CD8-positive, alpha-beta memory T cell (primary cell): ENCODE measurements at regions of chr19 and their contacts with region 1.

Region 1: DNA sequence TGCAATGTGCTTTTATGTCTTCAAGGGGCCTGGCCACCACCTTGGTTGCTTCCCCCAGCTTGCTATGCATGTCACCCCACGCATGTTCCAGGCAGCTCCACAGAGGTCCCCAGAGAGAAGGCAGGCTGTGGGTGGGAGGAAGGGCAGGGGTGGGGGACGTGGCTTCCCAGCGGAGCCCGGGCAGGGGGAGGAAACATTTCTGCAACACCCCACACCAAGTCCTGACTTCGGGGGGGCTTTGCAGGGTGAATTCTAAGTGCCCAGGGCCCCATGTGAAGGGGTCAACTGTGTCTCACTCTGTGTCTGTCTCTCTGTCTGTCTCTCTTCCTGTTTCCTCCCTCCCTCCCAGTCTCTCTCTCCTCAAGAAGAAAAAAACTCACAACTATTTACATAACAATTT is 39.6 kb downstream of the LTBP4 start:
- DNase-seq: no peak
- H3K4me3 ChIP-seq: no peak overlapping the region
- H3K4me3 Mint-ChIP-seq: no peak overlapping the region
- H3K27ac ChIP-seq: no peak overlapping the region
- H3K27ac Mint-ChIP-seq: no peak overlapping the region
- H3K4me1 ChIP-seq: no peaks in the 10 kb centered on the region
- H3K4me1 Mint-ChIP-seq: peaks cover 0 to 5% (median 0%) of the 10 kb centered on the region in 3 donors
- H3K27me3 ChIP-seq: no peaks in the 10 kb centered on the region
- H3K27me3 Mint-ChIP-seq: peaks cover 10 to 12% of the 10 kb centered on the region in 2 donors

Region 2: GRCh38 chr19:40305403-40305802 is 335.3 kb before region 1 on chr19:
- CTCF ChIA-PET with region 1: interaction called, 14 read pairs
- POLR2A ChIA-PET with region 1: no interaction called
- DNase-seq: peak; percentile 54 to 78 (median 61)
- H3K4me3 ChIP-seq: no peak overlapping the region
- H3K4me3 Mint-ChIP-seq: no peak overlapping the region
- H3K27ac ChIP-seq: no peak overlapping the region
- H3K27ac Mint-ChIP-seq: no peak overlapping the region
- H3K4me1 ChIP-seq: peaks cover 3% of the 10 kb centered on the region
- H3K4me1 Mint-ChIP-seq: peaks cover 3 to 8% (median 5%) of the 10 kb centered on the region in 3 donors
- H3K27me3 ChIP-seq: no peaks in the 10 kb centered on the region
- H3K27me3 Mint-ChIP-seq: no peaks in the 10 kb centered on the region

Region 3: GRCh38 chr19:40452016-40452415 is 188.7 kb before region 1 on chr19:
- CTCF ChIA-PET with region 1: no interaction called
- POLR2A ChIA-PET with region 1: no interaction called
- DNase-seq: no peak
- H3K4me3 ChIP-seq: no peak overlapping the region
- H3K4me3 Mint-ChIP-seq: no peak overlapping the region
- H3K27ac ChIP-seq: no peak overlapping the region
- H3K27ac Mint-ChIP-seq: no peak overlapping the region
- H3K4me1 ChIP-seq: no peaks in the 10 kb centered on the region
- H3K4me1 Mint-ChIP-seq: no peaks in the 10 kb centered on the region
- H3K27me3 ChIP-seq: no peaks in the 10 kb centered on the region
- H3K27me3 Mint-ChIP-seq: no peaks in the 10 kb centered on the region

Region 4: GRCh38 chr19:40549007-40549708 is 91.6 kb before region 1 on chr19:
- CTCF ChIA-PET with region 1: interaction called, 13 read pairs
- POLR2A ChIA-PET with region 1: no interaction called
- DNase-seq: peak; percentile 50 to 77 (median 60)
- H3K4me3 ChIP-seq: no peak overlapping the region
- H3K4me3 Mint-ChIP-seq: peak overlapping the region in 3 of 7 donors; percentile 50 to 88 (median 50)
- H3K27ac ChIP-seq: no peak overlapping the region
- H3K27ac Mint-ChIP-seq: no peak overlapping the region
- H3K4me1 ChIP-seq: no peaks in the 10 kb centered on the region
- H3K4me1 Mint-ChIP-seq: peaks cover 6 to 9% (median 7%) of the 10 kb centered on the region in 3 donors
- H3K27me3 ChIP-seq: peaks cover 23% of the 10 kb centered on the region
- H3K27me3 Mint-ChIP-seq: peaks cover 26 to 63% of the 10 kb centered on the region in 2 donors

Region 5: GRCh38 chr19:40716655-40717324 is 76.0 kb after region 1 on chr19 and contains the starts of genes COQ8B and ITPKC:
- CTCF ChIA-PET with region 1: no interaction called
- POLR2A ChIA-PET with region 1: no interaction called
- DNase-seq: peak; percentile 98 to 100 (median 99)
- H3K4me3 ChIP-seq: peak within 1 kb of the TSS; percentile 99
- H3K4me3 Mint-ChIP-seq: peak within 1 kb of the TSS; percentile 87 to 97 (median 91)
- H3K27ac ChIP-seq: peak within 1 kb of the TSS; percentile 98
- H3K27ac Mint-ChIP-seq: peak within 1 kb of the TSS; percentile 93 to 100 (median 98)
- H3K4me1 ChIP-seq: peaks cover 59% of the 10 kb centered on the region
- H3K4me1 Mint-ChIP-seq: peaks cover 58 to 81% (median 72%) of the 10 kb centered on the region in 3 donors
- H3K27me3 ChIP-seq: no peaks in the 10 kb centered on the region
- H3K27me3 Mint-ChIP-seq: peaks cover 0 to 2% of the 10 kb centered on the region in 2 donors
- total RNA-seq, gene COQ8B: 20.6 to 25.7 TPM
- total RNA-seq, gene ITPKC: 5.5 to 5.7 TPM